AG04450 (cell line): ENCODE measurements at regions of chr7 and their contacts with region 1.

Region 1: DNA sequence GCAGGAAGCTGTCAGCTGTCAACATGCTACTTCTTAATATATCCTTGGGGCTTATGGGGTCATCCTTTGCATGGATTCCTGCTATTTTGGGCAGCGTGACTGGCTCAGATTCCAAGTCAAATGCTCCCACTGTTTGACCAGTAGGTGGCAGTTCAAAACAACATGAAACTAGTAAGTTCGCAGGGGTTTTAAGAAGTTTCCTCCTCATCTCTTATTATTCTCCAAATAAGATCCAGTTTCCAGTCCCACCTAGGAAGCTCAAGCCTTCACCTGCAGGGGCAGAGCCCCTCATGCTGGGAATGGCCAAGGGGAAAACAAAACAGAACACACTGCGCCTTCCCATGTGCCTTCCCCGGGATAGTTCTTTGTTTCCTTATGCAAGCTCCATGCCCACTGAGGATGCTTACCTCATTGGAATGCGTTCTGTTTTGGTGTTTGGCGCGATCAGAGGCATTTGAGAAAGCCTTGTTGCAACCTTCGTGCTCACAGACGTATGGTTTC is 259.8 kb downstream of the GLI3 start:
- DNase-seq: no peak
- H3K4me3 ChIP-seq: no peak overlapping the region
- H3K27ac ChIP-seq: no peak overlapping the region
- H3K27me3 ChIP-seq: no peaks in the 10 kb centered on the region
- CTCF ChIP-seq: peak; percentile 84

Region 2: GRCh38 chr7:41955893-41956675 is 21.1 kb before region 1 on chr7:
- CTCF ChIA-PET with region 1: interaction called, 29 read pairs
- POLR2A ChIA-PET with region 1: interaction called, 3 read pairs
- DNase-seq: peak; percentile 99
- H3K4me3 ChIP-seq: peak overlapping the region; percentile 39
- H3K27ac ChIP-seq: peak overlapping the region; percentile 80
- H3K27me3 ChIP-seq: no peaks in the 10 kb centered on the region
- CTCF ChIP-seq: no peak

Region 3: DNA sequence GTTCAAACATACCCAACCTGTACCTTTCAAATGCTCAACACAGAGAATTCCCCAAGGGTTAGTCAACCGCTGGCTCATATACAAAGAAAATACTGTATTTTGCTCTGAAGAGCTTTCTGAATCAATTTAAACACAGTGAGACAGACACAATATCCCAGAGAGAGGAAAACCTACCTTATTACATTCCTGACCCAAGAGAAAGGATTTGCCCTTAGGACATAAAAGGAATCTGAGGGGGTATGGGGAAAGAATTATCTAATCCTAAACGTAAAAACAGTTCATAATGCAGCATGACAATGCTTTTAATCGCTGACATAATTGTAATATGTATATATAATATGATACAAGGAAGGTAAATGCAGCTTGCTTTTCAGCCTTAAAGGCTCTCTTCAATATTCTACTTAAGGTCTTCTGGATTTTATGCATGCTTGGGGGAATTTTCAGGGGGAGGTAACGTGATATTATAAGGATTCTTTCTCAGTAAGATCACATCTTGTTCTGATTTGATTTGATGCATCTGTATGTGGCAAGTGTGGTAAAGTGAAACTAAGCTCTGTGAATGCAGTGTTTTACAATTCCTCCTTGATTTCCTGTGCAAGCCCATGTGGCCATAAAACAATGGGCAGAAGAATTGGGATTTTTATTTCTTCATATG is 19.3 kb after region 1 on chr7:
- CTCF ChIA-PET with region 1: interaction called, 68 read pairs
- POLR2A ChIA-PET with region 1: interaction called, 3 read pairs
- DNase-seq: peak; percentile 44
- H3K4me3 ChIP-seq: no peak overlapping the region
- H3K27ac ChIP-seq: peak overlapping the region; percentile 63
- H3K27me3 ChIP-seq: no peaks in the 10 kb centered on the region
- CTCF ChIP-seq: no peak

Region 4: GRCh38 chr7:42232275-42232674 is 255.1 kb after region 1 on chr7:
- CTCF ChIA-PET with region 1: interaction called, 22 read pairs
- POLR2A ChIA-PET with region 1: interaction called, 5 read pairs
- DNase-seq: no peak
- H3K4me3 ChIP-seq: no peak overlapping the region
- H3K27ac ChIP-seq: no peak overlapping the region
- H3K27me3 ChIP-seq: no peaks in the 10 kb centered on the region
- CTCF ChIP-seq: no peak

Region 5: GRCh38 chr7:42843205-42843800 is 866.1 kb after region 1 on chr7:
- CTCF ChIA-PET with region 1: interaction called, 10 read pairs
- POLR2A ChIA-PET with region 1: no interaction called
- DNase-seq: no peak
- H3K4me3 ChIP-seq: no peak overlapping the region; the same call in 1 of the 2 replicates
- H3K27ac ChIP-seq: no peak overlapping the region
- H3K27me3 ChIP-seq: peaks cover 17% of the 10 kb centered on the region
- CTCF ChIP-seq: peak; percentile 59